Psoas muscle (tissue), 8 donors: ENCODE measurements at regions of chr2 and their contacts with region 1.

Region 1: DNA sequence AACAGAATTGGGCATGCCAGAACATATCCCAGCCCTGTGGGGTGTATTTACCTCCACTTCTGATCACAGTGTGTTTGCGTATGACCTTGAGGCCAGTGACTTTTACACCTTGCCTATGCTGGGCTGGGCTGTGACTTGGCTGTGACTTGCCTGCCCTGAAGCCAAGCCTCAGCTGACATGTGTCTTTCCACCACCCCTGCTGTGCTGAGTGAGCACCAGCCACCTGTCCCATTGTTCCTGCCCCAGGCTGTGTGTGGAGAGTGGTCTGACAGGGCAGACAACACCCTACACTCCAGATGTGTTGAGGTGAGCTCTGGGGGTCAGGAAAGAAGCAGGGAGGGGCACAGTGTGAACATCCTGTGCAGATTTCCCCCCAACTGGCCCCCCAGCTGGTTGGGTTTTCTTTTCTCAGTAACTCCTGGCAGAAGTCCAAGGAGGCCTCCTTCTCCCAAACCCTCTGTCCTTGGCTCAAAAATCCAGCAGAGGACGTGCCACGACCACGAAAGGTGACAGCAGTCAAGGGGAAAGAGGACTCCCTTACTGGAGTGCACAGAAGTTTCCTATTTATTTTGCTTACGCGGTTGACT is 5.1 kb upstream of the STEAP3 start:
- DNase-seq: peak in 1 of 2 donors; percentile 80
- ATAC-seq: peak; percentile 79 to 87 (median 84)
- H3K4me3 ChIP-seq: no peak overlapping the region
- H3K27ac ChIP-seq: peak overlapping the region; percentile 51
- H3K4me1 ChIP-seq: peaks cover 4% of the 10 kb centered on the region
- H3K27me3 ChIP-seq: no peaks in the 10 kb centered on the region
- CTCF ChIP-seq: peak; percentile 46

Region 2: DNA sequence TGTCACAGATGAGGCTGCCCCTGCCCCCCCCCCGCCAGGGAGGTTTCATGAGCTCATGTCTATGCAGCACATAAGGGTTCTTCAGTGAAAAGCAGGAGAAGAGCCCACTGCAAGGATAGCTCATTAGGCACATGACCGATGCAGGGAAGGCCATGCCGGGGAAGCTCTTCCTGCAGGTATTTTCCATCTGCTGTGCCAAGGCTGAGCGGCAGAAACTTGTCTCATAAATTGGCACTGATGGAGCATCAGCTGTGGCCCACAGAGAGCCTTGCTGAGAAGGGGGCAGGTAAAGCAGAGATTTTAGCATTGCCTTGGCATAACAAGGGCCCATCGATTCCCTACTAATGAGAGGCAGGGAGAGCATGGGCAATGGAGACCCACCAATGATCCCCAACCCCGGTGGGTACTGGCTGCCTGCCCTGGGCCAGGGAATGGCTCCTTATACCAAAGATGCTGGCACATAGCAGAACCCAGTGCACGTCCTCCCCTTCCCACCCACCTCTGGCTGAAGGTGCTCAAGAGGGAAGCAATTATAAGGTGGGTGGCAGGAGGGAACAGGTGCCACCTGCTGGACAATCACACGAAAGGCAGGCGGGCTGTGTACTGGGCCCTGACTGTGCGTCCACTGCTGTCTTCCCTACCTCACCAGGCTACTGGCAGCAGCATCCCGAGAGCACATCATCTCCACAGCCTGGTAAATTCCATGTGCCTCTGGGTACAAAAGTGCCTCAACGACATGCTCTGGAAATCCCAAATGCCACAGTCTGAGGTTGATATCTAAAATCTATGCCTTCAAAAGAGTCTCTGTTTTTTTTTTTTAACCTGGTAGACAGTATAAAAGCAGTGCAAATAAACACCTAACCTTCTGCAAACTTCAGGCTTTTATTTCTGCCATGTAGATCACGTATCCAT is 46.5 kb after region 1 on chr2:
- intact Hi-C with region 1: loop called (anchors 2 to 5 kb)
- DNase-seq: peak; percentile 41 to 68
- ATAC-seq: peak; percentile 93 to 98 (median 94)
- H3K4me3 ChIP-seq: no peak overlapping the region
- H3K27ac ChIP-seq: no peak overlapping the region
- H3K4me1 ChIP-seq: peaks cover 5% of the 10 kb centered on the region
- H3K27me3 ChIP-seq: no peaks in the 10 kb centered on the region
- CTCF ChIP-seq: peak; percentile 80

Region 3: GRCh38 chr2:119290859-119291587 is 72.5 kb after region 1 on chr2:
- intact Hi-C with region 1: loop called (anchors 2 to 10 kb)
- DNase-seq: peak; percentile 74 to 86
- ATAC-seq: peak; percentile 83 to 85 (median 83)
- H3K4me3 ChIP-seq: no peak overlapping the region
- H3K27ac ChIP-seq: no peak overlapping the region
- H3K4me1 ChIP-seq: peaks cover 12% of the 10 kb centered on the region
- H3K27me3 ChIP-seq: no peaks in the 10 kb centered on the region
- CTCF ChIP-seq: peak; percentile 85

Region 4: GRCh38 chr2:120470041-120470965 is 1251.7 kb after region 1 on chr2:
- intact Hi-C with region 1: no loop called
- DNase-seq: peak; percentile 85 to 94
- ATAC-seq: peak; percentile 89 to 92 (median 90)
- H3K4me3 ChIP-seq: no peak overlapping the region
- H3K27ac ChIP-seq: peak overlapping the region; percentile 81
- H3K4me1 ChIP-seq: peaks cover 34% of the 10 kb centered on the region
- H3K27me3 ChIP-seq: no peaks in the 10 kb centered on the region
- CTCF ChIP-seq: no peak